Cardiac septum (tissue), 1 donor: ENCODE measurements at regions of chrX and their contacts with region 1.

Region 1: GRCh38 chrX:9464435-9465371 is at the start of gene TBL1X:
- DNase-seq: peak; percentile 87
- total RNA-seq, gene TBL1X: 11.3 TPM

Region 2: DNA sequence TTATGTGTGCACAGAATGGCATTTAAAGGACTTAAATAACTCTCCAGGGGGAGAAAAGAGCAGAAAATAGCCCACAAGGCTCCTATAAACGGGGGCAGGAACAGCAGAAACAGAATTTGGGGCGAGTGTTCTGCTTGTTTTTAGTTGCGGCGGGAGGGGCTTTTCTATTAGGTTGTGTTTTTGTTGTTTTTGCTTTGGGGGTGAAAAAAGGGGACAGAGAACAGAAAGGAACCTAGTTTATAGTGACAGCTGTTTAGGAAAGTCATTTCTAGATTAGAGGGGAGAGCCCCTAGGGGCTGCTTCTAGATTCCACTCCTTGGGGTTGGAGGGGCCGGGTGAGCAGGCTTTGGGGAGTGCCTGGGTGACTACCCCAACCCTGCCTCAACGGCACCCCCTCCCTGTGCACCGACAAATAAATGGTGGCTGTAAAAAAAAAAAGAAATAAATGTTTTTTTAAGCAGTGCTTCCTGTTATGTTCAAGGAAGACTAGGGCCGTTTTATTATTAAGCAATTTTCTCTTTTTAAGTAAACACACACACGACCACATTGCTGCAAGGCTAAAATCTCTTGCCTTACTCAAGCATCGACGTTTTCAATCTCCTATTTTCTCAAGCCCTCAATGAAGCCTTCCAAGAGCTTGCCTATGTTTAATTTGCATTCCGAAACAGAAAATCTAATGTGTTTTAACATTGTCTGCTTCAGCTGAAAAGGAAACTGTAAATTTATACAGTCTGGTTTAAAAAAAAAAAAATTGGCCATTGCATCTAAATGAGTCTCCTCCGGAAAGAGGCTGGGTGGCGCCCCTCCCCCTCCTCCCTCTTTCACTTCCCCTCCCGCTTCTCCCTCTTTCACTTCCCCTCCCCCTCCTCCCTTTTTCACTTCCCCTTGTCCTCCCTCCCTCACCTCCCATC is 123.2 kb before region 1 on chrX:
- intact Hi-C with region 1: loop called (anchors 1 kb)
- DNase-seq: no peak

Region 3: GRCh38 chrX:9515973-9516538 is 51.4 kb after region 1 on chrX:
- intact Hi-C with region 1: no loop called
- DNase-seq: no peak

Region 4: DNA sequence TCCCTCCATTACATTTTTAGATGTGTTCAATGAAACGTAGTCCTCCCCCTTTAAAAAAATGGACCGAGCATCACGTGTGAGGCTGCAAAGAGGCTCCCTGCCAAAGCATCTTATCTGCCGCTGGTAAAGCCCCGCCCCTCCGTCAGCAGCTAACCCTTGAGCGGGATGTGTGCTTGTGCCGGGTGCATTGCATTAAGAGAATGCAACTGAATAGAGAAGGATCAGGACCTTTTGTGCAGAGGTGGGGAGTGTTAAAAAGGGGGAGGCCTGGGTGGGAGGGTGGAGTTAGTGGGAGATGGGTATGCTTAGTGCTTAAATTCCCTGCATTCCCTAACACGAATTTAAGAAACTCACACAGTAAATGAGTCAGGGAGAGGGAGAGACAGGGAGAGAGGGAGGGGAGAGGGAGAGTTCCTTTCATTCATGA is 66.2 kb after region 1 on chrX:
- intact Hi-C with region 1: loop called (anchors 5 kb)
- DNase-seq: no peak

Region 5: GRCh38 chrX:9644335-9644734 is 179.6 kb after region 1 on chrX:
- intact Hi-C with region 1: loop called (anchors 10 kb)
- DNase-seq: no peak